ENCODE measurements at regions of chr19 and their contacts with region 1.

Region 1: DNA sequence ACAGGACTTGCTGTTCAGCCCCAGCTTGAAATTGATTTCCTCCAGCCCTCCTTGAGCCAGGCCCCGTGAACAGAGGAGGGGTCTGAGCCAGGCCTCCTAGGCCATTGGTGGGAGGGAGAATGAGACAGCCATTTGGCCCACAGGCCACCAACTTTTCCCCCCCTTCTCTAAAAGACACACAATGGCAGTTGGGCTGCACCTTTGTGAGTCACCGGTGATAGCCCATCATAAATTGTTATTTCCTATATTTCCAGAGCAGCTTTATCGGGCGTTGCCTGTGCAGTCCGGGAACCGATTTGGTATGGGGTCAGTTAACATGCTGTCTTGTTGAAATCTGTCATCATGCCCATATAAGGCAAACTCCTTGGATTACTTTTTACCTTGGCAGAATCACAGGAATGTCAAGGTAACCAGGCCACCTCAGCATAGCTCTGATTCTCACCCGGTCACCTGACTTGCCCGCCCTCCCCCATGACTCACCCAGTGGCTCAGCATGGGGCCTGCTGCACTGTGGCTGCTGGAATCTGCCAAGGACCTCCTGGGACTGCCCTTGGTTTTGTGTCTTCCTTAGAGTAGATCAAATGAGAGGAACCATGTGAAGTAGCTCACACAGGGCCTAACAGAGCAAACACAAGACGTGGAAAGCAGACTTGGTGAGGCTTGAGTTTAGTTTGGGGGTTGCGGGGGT is 36.1 kb downstream of the ACTN4 start:
- DNase-seq: peak; percentile 97 to 100
- H3K4me3 ChIP-seq: peak overlapping the region; percentile 36; the same call in 1 of the 2 replicates
- H3K27ac ChIP-seq: peak overlapping the region; percentile 100
- H3K4me1 ChIP-seq: peaks cover 95% of the 10 kb centered on the region
- H3K27me3 ChIP-seq: no peaks in the 10 kb centered on the region
- CTCF ChIP-seq: no peak

Region 2: GRCh38 chr19:38658462-38659306 is 24.9 kb before region 1 on chr19:
- CTCF ChIA-PET with region 1: no interaction called
- POLR2A ChIA-PET with region 1: interaction called, 51 read pairs
- intact Hi-C with region 1: loop called (anchors 1 kb)
- DNase-seq: peak; percentile 70 to 98
- H3K4me3 ChIP-seq: peak overlapping the region; percentile 54
- H3K27ac ChIP-seq: peak overlapping the region; percentile 99
- H3K4me1 ChIP-seq: peaks cover 97% of the 10 kb centered on the region
- H3K27me3 ChIP-seq: no peaks in the 10 kb centered on the region
- CTCF ChIP-seq: no peak

Region 3: GRCh38 chr19:38693380-38694223 is 10.1 kb after region 1 on chr19:
- CTCF ChIA-PET with region 1: interaction called, 3 read pairs
- POLR2A ChIA-PET with region 1: interaction called, 36 read pairs
- intact Hi-C with region 1: loop called (anchors 1 kb)
- DNase-seq: peak; percentile 88 to 94
- H3K4me3 ChIP-seq: peak overlapping the region; percentile 49; the same call in 1 of the 2 replicates
- H3K27ac ChIP-seq: peak overlapping the region; percentile 100
- H3K4me1 ChIP-seq: peaks cover 65% of the 10 kb centered on the region
- H3K27me3 ChIP-seq: no peaks in the 10 kb centered on the region
- CTCF ChIP-seq: no peak

Region 4: DNA sequence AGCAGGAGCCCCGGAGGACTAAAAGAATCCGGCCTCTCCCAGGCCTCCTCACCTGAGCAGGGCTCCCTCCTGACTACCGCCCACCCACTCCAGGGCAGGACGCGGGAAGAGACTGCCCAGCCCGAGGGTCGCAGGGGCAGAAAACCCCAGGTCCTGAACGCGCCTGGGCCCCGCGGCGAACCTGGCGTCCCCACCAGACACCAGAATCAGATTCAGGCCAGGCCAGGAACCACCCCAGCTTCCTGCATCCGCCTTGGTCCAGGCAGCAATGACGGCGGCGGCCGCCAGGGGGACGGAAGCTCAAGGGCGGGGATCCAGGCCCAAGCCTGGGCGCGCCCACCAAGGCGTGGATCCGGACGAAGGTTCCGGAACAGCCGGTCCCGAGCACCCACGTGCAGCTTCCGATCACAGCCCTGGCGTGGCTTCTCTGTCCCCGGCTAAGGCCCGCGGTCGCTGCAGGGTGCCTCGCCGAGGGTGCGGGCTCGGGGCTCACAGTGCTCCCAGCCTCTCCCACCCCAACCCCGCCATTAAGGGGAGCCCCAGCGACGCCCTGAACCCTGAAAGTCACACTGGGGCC is 86.2 kb after region 1 on chr19:
- CTCF ChIA-PET with region 1: no interaction called
- POLR2A ChIA-PET with region 1: interaction called, 12 read pairs
- intact Hi-C with region 1: no loop called
- DNase-seq: peak in 1 of 2 experiments; percentile 69
- H3K4me3 ChIP-seq: no peak overlapping the region
- H3K27ac ChIP-seq: no peak overlapping the region
- H3K4me1 ChIP-seq: no peaks in the 10 kb centered on the region
- H3K27me3 ChIP-seq: no peaks in the 10 kb centered on the region
- CTCF ChIP-seq: peak; percentile 80

Region 5: GRCh38 chr19:38862321-38863059 is 179.0 kb after region 1 on chr19:
- CTCF ChIA-PET with region 1: no interaction called
- POLR2A ChIA-PET with region 1: no interaction called
- intact Hi-C with region 1: no loop called
- DNase-seq: peak in 1 of 2 experiments; percentile 53
- H3K4me3 ChIP-seq: no peak overlapping the region
- H3K27ac ChIP-seq: peak overlapping the region; percentile 99
- H3K4me1 ChIP-seq: peaks cover 52% of the 10 kb centered on the region
- H3K27me3 ChIP-seq: no peaks in the 10 kb centered on the region
- CTCF ChIP-seq: no peak

Region 6: DNA sequence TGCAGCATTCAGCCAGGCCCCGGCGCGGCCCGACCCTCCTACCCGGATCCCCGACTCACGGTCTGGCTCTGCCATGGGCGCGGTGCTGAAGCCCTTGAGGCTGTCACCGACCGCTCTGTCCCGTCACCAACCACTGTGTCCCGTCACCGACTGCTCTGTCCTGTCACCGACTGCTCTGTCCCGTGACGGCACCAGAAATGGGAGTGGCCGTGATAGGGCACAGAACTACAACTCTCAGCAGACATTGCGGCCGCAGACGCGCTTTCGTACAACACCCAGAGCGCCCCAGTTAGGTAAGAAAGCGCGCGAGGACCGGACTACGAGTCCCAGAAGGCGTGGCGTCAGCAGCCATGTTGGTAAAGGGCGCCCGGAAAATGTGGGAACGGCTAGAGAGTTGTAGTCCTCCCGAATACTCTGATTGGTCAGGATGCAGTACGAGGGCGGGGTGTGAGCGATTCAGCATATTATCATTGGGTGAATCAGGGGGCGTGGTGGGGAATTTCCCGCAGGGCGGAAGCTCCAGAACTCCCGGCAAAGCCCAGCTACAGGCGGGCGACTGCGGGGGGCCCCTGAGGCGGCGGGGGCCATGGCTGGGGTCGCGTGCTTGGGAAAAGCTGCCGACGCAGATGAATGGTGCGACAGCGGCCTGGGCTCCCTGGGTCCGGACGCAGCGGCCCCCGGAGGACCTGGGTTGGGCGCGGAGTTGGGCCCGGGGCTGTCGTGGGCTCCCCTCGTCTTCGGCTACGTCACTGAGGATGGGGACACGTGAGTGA is 216.1 kb after region 1 on chr19 and contains the starts of genes NFKBIB and SIRT2:
- CTCF ChIA-PET with region 1: no interaction called
- POLR2A ChIA-PET with region 1: interaction called, 12 read pairs
- intact Hi-C with region 1: no loop called
- DNase-seq: peak; percentile 99
- H3K4me3 ChIP-seq: peak within 1 kb of the TSS; percentile 73
- H3K27ac ChIP-seq: peak within 1 kb of the TSS; percentile 64
- H3K4me1 ChIP-seq: peaks cover 16% of the 10 kb centered on the region
- H3K27me3 ChIP-seq: no peaks in the 10 kb centered on the region
- CTCF ChIP-seq: no peak
- total RNA-seq, gene NFKBIB: 18.8 and 21.6 TPM in 2 replicates
- total RNA-seq, gene SIRT2: 29.6 and 32.9 TPM in 2 replicates

Measured in PC-9 (cell line).